AG04449 (cell line): ENCODE measurements at regions of chr2 and their contacts with region 1.

Region 1: DNA sequence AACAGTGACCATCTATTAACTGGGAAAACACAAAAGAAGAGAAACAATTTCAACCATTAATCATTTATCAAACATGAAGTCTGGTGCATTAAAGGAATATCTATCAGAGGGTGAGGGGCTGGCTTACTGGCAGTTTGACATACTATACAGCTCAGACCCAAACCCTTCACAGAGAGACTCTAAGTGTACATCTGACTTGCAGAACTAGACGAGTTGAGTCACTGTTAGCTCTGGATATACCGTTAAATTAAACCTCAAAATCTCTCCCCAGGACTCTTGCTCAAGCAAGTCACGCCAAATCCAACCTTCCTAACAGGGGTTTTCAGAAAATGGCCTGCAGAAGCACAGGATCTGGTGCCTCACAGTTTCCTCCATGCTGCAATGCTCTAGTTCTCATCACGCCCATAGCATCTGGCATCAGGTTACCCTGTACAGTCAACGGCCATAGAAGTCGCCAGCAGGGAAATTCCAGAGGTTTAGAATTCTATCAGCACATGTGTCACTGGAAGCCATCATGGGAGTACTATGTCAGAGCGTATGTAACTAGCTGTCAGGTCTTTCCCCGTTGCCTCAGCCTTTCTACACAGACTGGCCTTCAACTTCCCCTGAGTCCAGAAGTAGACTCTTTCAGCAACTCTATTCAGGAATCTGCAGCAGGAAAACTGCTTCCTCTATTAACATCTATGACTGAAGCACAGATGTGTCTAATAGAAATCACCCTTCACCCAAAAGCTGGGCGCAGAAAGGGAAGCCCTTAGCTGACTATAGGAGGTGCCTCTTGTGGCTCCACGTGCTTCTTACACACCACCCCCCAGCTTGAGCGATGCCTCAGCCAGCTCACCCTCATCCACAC is 9.3 kb downstream of the TGOLN2 start:
- DNase-seq: peak; percentile 41
- H3K4me3 ChIP-seq: no peak overlapping the region
- CTCF ChIP-seq: no peak

Region 2: DNA sequence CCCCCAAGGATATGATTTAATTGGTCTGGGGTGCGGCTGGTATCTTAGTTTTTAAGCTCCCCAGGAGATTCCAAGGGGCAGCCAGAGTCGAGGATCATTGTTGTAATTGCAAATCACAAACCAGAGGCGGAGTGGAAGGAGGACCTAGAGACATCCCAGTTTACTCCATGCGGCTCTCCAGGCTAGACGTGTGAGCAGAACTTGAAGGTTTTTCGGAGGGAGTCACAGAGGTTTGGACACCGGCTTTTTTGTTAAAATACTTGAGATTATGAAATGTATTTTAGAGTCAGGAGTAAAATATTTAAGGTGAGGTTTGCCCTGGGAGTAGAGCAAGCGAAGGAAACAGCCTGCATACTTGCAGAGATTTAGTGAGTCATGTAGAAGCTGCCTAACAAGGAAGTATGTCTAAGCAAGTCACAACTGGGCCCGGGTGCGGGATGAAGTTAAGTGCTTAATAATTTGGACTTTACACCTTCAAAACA is 30.2 kb before region 1 on chr2:
- CTCF ChIA-PET with region 1: no interaction called
- POLR2A ChIA-PET with region 1: no interaction called
- DNase-seq: peak; percentile 50
- H3K4me3 ChIP-seq: no peak overlapping the region
- CTCF ChIP-seq: no peak

Region 3: GRCh38 chr2:85344356-85344954 is 26.0 kb after region 1 on chr2:
- CTCF ChIA-PET with region 1: no interaction called
- POLR2A ChIA-PET with region 1: interaction called, 10 read pairs
- DNase-seq: no peak
- H3K4me3 ChIP-seq: no peak overlapping the region
- CTCF ChIP-seq: no peak